Activated B cell treated with CpG ODN at 0.5 μM for 24 hours (primary cell): ENCODE measurements at regions of chr10 and their contacts with region 1.

Region 1: DNA sequence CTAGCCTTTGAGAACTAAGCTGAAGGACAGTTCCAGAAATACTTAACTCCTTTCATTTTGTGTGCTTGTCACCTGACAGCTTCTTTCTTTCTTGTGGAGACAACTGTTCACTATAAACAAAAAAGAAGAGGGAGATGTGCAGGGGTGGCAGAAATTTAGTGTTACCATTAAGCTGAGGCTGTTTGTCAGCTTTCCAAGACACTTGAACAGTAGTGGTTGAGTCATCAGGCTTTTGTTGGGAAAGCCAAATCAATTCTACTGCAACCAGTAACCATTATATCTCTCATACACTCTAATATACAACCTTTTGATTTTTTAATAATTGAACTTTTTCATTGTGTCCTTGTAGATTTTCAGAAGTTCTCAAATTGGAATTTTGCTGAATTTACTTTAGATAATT is 75.3 kb downstream of the POLL start:
- DNase-seq: no peak
- ATAC-seq: no peak
- H3K4me3 Mint-ChIP-seq: no peak overlapping the region
- H3K27ac Mint-ChIP-seq: no peak overlapping the region
- H3K4me1 Mint-ChIP-seq: no peaks in the 10 kb centered on the region
- H3K27me3 Mint-ChIP-seq: no peaks in the 10 kb centered on the region
- CTCF ChIP-seq: no peak

Region 2: GRCh38 chr10:101478956-101479355 is 33.8 kb before region 1 on chr10:
- CTCF ChIA-PET with region 1: no interaction called
- POLR2A ChIA-PET with region 1: interaction called, 11 read pairs
- intact Hi-C with region 1: no loop called
- DNase-seq: no peak
- ATAC-seq: no peak
- H3K4me3 Mint-ChIP-seq: no peak overlapping the region
- H3K27ac Mint-ChIP-seq: no peak overlapping the region
- H3K4me1 Mint-ChIP-seq: no peaks in the 10 kb centered on the region
- H3K27me3 Mint-ChIP-seq: no peaks in the 10 kb centered on the region
- CTCF ChIP-seq: no peak

Region 3: DNA sequence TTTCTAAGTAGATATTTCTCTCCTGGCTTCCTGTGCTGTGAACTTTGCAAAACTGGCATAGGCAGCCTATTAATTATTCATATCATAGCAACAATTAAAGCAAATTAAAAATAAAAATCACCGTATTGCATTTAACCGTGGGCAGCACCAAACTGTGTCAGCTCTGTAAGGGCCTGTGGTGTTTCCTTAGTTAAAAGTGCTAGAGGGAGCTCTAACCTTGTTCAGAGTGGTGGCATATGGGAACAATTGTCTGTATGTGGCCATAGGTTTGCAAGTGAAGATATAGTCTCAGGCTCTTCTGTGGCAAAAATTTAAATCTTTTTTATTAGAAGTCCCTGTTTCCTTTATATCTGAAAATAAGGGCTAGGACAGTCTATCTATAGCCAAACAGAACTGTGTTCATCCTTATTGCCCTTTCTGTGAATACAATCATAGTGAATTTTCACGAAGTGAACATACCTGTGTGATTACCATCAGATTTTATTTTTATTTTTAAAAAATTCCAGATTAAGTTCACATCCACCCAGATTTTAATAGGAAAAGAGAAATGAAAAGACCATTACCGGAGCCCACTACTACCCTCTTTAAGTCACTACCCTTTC is 17.3 kb before region 1 on chr10:
- CTCF ChIA-PET with region 1: no interaction called
- POLR2A ChIA-PET with region 1: no interaction called
- intact Hi-C with region 1: no loop called
- DNase-seq: no peak
- ATAC-seq: no peak
- H3K4me3 Mint-ChIP-seq: no peak overlapping the region
- H3K27ac Mint-ChIP-seq: no peak overlapping the region
- H3K4me1 Mint-ChIP-seq: no peaks in the 10 kb centered on the region
- H3K27me3 Mint-ChIP-seq: no peaks in the 10 kb centered on the region
- CTCF ChIP-seq: no peak